ENCODE measurements at regions of chr2 and their contacts with region 1.

Region 1: GRCh38 chr2:238288650-238289573 is 502 bp upstream of the PER2 start:
- DNase-seq: peak; percentile 99
- ATAC-seq: peak; percentile 91

Region 2: DNA sequence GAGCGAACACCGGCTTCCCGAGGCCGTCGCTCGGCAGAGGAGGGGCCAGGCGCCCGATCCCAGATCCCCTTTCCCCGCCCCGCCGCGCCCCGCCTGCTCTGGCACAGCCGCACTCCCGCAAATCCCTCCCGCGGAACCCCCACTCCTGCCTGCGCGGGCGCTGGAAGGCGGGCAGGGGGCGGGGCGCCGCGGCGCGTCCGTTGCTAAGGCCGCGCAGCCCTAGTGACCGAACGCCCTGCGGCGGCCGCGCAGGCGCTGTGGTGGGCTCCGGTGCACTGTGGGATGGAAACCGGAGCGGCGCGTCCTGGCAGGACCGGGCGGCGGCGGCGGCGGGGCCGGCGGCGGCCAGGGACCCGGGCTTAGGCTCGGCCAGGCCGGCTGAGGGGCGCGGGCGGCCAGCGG is 31.3 kb after region 1 on chr2 and contains the start of gene TRAF3IP1:
- intact Hi-C with region 1: loop called (anchors 1 kb)
- DNase-seq: peak; percentile 97
- ATAC-seq: peak; percentile 98
- total RNA-seq, gene TRAF3IP1: 11.2 TPM